H1 (cell line): ENCODE measurements at regions of chr1 and their contacts with region 1.

Region 1: GRCh38 chr1:17125756-17126237 is 6.5 kb upstream of the PADI2 start:
- DNase-seq: peak; percentile 68 to 99
- H3K4me3 ChIP-seq: no peak overlapping the region
- H3K27ac ChIP-seq: no peak overlapping the region
- H3K4me1 ChIP-seq: peaks cover 0 to 8% (median 3%) of the 10 kb centered on the region in 4 experiments; a peak in 6 of 7 replicates
- H3K27me3 ChIP-seq: no peaks in the 10 kb centered on the region; a peak in 1 of 7 replicates
- CTCF ChIP-seq: peak; percentile 93 to 98 (median 93)
- EP300 ChIP-seq: no peak
- POLR2A ChIP-seq: no peak
- RAD21 ChIP-seq: peak; percentile 99

Region 2: DNA sequence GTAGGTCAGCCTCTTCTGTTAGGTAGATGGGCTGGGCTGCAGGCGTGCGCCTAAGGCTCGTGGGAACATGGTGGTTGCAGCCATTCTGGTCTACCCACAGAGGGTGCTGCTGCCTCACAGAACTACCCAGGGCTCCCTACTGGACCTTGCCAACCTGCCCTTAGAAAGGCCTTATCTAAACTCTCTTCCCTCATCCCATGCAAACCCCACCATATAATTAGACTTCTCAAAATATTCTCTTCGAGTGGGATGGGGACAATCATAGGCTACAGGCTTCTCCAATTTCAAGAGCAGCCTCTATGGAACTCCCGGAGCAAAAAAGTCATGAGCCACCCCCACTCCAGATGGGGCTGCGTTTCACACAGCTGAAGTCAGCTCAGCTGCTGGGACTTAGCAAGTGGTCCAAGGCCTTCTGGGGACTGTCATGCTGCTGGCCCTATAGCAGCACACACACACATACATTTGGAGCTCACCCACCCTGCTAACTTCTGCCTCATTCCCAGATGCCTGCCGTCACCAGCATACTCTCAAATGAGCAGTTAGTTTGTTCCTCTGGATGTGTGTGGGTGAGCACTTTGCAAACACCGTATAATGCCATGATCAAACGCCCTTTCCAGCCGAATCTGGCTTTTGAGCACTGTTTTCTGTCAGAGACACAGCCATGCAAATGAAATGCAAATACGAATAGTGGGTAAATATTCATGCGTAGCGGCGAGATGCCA is 65.9 kb before region 1 on chr1:
- CTCF ChIA-PET with region 1: interaction called, 111 read pairs
- POLR2A ChIA-PET with region 1: interaction called, 3 read pairs
- DNase-seq: peak; percentile 77 to 79
- H3K4me3 ChIP-seq: no peak overlapping the region
- H3K27ac ChIP-seq: no peak overlapping the region
- H3K4me1 ChIP-seq: peaks cover 4 to 9% (median 6%) of the 10 kb centered on the region in 4 experiments; a peak in 5 of 7 replicates
- H3K27me3 ChIP-seq: no peaks in the 10 kb centered on the region
- CTCF ChIP-seq: peak; percentile 90 to 94 (median 94)
- EP300 ChIP-seq: no peak
- POLR2A ChIP-seq: no peak
- RAD21 ChIP-seq: peak; percentile 95 to 97

Region 3: GRCh38 chr1:17136936-17137335 is 11.1 kb after region 1 on chr1:
- CTCF ChIA-PET with region 1: interaction called, 33 read pairs
- POLR2A ChIA-PET with region 1: no interaction called
- DNase-seq: no peak
- H3K4me3 ChIP-seq: no peak overlapping the region
- H3K27ac ChIP-seq: no peak overlapping the region
- H3K4me1 ChIP-seq: peaks cover 0 to 3% (median 0%) of the 10 kb centered on the region in 4 experiments; a peak in 1 of 7 replicates
- H3K27me3 ChIP-seq: no peaks in the 10 kb centered on the region
- CTCF ChIP-seq: no peak
- EP300 ChIP-seq: no peak
- POLR2A ChIP-seq: no peak
- RAD21 ChIP-seq: no peak

Region 4: DNA sequence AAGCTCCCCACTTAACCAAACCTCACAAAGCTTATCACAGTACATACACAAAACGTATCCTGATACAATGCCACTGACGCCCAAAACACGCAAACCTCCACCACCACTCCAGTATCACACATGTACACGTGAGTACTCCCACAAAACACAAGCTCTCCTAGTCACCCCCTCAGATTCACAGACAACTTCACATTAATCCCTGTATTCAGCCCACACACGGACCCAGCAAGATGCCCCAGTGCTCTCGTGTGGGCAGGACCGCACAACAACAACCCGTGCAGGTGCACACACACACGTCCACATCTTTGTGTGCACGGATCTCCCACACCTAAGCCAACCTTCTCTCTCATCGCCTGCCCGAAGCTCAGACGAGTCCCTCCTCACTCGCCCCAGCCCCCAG is 96.8 kb after region 1 on chr1:
- CTCF ChIA-PET with region 1: interaction called, 16 read pairs
- POLR2A ChIA-PET with region 1: no interaction called
- DNase-seq: no peak
- H3K4me3 ChIP-seq: no peak overlapping the region
- H3K27ac ChIP-seq: no peak overlapping the region
- H3K4me1 ChIP-seq: no peaks in the 10 kb centered on the region; a peak in 1 of 7 replicates
- H3K27me3 ChIP-seq: no peaks in the 10 kb centered on the region; a peak in 1 of 7 replicates
- CTCF ChIP-seq: no peak
- EP300 ChIP-seq: no peak
- POLR2A ChIP-seq: no peak
- RAD21 ChIP-seq: no peak

Region 5: GRCh38 chr1:17244816-17245740 is 119.3 kb after region 1 on chr1:
- CTCF ChIA-PET with region 1: interaction called, 339 read pairs
- POLR2A ChIA-PET with region 1: no interaction called
- DNase-seq: no peak
- H3K4me3 ChIP-seq: no peak overlapping the region
- H3K27ac ChIP-seq: no peak overlapping the region
- H3K4me1 ChIP-seq: peaks cover 0 to 12% (median 3%) of the 10 kb centered on the region in 4 experiments; a peak in 4 of 7 replicates
- H3K27me3 ChIP-seq: no peaks in the 10 kb centered on the region
- CTCF ChIP-seq: no peak
- EP300 ChIP-seq: no peak
- POLR2A ChIP-seq: no peak
- RAD21 ChIP-seq: no peak

Region 6: DNA sequence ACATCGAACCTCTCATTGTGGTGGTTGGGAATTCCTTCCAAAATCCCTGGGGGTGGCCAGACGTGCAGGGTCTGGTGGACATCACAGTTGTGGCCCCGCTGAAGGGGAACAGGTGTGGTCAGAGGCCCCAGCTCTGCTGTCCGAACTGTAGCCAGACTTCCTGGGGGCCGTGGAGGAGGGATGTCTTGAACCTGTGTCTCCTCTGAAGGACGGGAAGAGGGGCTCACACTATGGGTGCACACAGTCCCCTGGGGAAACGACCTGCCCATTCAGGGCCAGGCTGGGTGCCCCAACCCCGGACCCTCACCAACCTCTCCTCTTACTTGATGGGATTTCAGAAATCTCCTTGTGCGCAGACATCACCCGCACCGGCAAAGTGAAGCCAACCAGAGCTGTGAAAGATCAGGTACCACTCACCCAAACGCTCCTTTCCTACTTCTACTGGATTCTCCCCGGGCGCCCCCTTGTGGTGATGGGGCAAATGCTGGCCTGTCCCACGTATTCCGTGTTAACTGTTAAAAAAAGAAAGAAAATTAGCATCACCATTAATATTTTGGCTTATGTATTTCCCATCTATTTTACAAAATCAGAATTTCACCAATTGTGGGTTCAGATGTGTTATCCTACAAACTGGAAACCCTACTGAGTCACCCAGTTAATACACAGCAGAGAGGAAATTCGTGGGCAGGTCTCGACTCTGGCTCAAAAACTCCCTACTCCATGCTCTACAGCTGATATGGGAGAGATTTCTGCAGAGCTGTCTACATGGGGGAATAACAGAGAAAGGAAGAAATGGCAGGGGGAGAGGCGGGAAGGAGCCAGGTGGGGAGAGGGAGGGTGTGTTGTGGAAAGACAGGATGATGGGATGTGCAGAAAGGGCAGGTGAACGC is 210.3 kb after region 1 on chr1:
- CTCF ChIA-PET with region 1: interaction called, 14 read pairs
- POLR2A ChIA-PET with region 1: no interaction called
- DNase-seq: peak; percentile 23 to 96
- H3K4me3 ChIP-seq: no peak overlapping the region
- H3K27ac ChIP-seq: no peak overlapping the region
- H3K4me1 ChIP-seq: no peaks in the 10 kb centered on the region
- H3K27me3 ChIP-seq: peaks cover 0 to 3% (median 0%) of the 10 kb centered on the region in 4 experiments; a peak in 3 of 7 replicates
- CTCF ChIP-seq: peak; percentile 78 to 85 (median 80)
- EP300 ChIP-seq: no peak
- POLR2A ChIP-seq: no peak
- RAD21 ChIP-seq: peak; percentile 72 to 82